ENCODE measurements at regions of chr6 and their contacts with region 1.

Region 1: GRCh38 chr6:45714741-45715507 is 300.7 kb downstream of the CLIC5 start:
- DNase-seq: peak; percentile 46
- H3K4me3 Mint-ChIP-seq: no peak overlapping the region
- H3K27ac Mint-ChIP-seq: peak overlapping the region; percentile 73
- H3K4me1 Mint-ChIP-seq: peaks cover 38% of the 10 kb centered on the region
- H3K27me3 Mint-ChIP-seq: peaks cover 2% of the 10 kb centered on the region

Region 2: GRCh38 chr6:44932651-44933091 is 782.3 kb before region 1 on chr6:
- intact Hi-C with region 1: loop called (anchors 5 kb)
- DNase-seq: no peak
- H3K4me3 Mint-ChIP-seq: peak overlapping the region; percentile 79
- H3K27ac Mint-ChIP-seq: peak overlapping the region; percentile 94
- H3K4me1 Mint-ChIP-seq: peaks cover 56% of the 10 kb centered on the region
- H3K27me3 Mint-ChIP-seq: no peaks in the 10 kb centered on the region

Region 3: DNA sequence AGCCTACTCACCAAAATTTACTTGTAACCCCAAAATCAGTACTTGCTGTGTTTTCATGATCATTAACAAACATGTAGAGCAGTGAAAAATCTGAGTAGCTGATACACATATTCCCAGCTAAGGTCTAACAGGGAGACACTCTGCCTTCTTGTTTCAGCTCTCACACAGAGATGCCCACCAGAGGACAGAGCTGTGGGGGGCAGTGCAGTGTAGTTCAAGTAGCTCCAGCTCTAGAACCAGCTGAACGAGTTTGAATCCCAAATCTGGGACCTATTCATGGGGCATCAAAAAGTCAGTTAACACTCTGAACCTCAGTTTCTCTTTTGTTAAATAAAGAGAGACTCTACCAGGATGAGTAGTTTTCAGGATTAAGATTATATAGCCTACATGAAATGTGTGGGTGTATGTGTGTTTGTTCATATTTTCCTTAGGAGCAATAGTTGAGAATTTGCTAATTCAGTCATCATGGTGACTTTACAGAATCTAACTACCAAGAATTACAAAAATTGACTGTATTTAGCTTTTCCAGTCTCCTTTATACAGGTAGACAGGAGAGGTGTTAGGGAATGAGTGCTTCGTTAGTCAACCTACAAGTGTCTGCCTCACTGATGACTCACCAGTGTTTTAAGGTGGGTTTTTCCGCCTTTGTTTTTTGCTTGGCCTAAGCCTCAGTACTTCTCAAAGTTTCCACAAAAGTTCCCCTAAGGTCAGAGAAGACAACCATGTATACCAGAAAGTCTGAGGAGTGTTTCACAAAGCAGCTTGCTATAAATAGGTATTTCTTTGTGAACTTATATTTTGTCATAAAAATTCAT is 550.8 kb before region 1 on chr6:
- intact Hi-C with region 1: loop called (anchors 1 kb)
- DNase-seq: peak; percentile 31
- H3K4me3 Mint-ChIP-seq: peak overlapping the region; percentile 35
- H3K27ac Mint-ChIP-seq: peak overlapping the region; percentile 89
- H3K4me1 Mint-ChIP-seq: peaks cover 62% of the 10 kb centered on the region
- H3K27me3 Mint-ChIP-seq: no peaks in the 10 kb centered on the region

Region 4: DNA sequence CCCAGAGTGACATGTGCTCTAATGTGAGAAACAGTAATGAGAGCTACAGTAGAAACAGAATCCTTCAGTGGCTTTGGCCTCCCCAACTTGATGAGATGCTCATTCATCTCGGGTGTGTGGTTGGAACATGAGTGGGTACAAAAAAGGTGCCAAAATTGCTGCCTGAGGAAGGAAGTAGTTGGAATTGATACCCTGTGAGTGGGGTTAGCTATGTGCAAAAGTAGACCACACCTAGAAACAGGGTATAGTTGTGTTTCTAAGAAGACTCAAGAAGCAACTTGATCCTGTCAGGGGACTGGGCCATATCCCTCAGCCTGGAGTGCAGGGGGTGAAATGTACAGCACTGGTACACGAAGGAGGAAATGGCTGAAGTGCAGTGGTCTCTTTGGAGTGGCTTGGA is 130.8 kb before region 1 on chr6:
- intact Hi-C with region 1: loop called (anchors 1 kb)
- DNase-seq: no peak
- H3K4me3 Mint-ChIP-seq: peak overlapping the region; percentile 27
- H3K27ac Mint-ChIP-seq: peak overlapping the region; percentile 84
- H3K4me1 Mint-ChIP-seq: peaks cover 52% of the 10 kb centered on the region
- H3K27me3 Mint-ChIP-seq: no peaks in the 10 kb centered on the region

Region 5: DNA sequence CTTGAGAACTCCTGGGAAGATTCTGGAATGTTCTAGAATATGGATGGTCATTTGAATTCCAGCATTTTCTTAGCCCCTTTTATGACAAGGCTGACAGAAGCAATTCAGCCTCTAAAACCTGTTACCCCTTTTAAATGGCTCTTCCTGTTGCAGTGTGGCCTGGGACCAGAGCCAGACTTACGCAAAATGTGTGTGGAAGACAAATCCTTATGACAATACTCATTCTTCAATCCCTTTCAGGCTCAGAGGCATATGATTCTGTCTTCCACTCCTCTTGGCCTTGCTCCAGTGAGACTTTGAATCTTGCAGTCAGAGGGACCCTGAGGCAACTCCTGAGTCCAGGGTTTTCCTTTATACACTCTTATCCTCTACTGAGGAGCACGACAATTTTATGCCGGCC is 13.8 kb after region 1 on chr6:
- intact Hi-C with region 1: no loop called
- DNase-seq: no peak
- H3K4me3 Mint-ChIP-seq: no peak overlapping the region
- H3K27ac Mint-ChIP-seq: peak overlapping the region; percentile 11
- H3K4me1 Mint-ChIP-seq: peaks cover 11% of the 10 kb centered on the region
- H3K27me3 Mint-ChIP-seq: peaks cover 4% of the 10 kb centered on the region

Region 6: DNA sequence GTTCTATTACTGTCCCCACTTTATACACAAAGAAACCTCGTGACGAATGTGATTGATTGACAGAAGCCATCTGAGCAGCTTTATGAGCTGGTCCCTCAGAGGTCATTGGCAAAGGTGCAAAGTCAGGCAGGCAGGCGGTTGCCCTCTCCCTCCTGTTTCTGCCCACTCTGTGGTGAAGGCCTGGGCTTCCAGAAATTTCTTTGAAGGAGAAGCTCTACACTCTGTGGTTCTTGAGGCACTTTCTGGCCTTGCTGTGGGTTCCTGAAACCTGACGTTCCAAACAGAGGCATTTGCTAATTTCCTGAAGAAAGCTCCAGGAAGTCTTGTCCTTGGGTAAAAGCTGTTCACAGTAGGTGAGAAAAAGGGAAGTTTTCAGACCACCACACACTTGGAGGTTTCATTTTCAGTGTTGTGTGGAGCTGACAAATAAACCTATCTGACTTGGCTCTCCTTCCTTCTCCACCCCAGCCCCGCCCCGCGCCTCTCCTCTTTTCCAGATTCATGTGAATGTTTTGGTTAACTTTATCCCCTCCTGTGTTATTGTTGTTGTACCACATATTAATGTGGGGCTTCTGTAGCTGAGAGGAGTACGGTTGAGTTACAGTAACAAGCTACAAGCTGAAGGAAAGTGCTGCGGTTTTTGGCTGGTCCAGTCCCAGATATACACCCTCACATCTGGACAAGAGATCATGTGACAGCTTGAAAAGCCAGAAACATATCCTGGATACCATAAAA is 26.7 kb after region 1 on chr6:
- intact Hi-C with region 1: loop called (anchors 1 kb)
- DNase-seq: no peak
- H3K4me3 Mint-ChIP-seq: peak overlapping the region; percentile 2
- H3K27ac Mint-ChIP-seq: peak overlapping the region; percentile 27
- H3K4me1 Mint-ChIP-seq: peaks cover 44% of the 10 kb centered on the region
- H3K27me3 Mint-ChIP-seq: peaks cover 3% of the 10 kb centered on the region

Region 7: GRCh38 chr6:46501136-46502089 is 786.5 kb after region 1 on chr6:
- intact Hi-C with region 1: no loop called
- DNase-seq: no peak
- H3K4me3 Mint-ChIP-seq: no peak overlapping the region
- H3K27ac Mint-ChIP-seq: no peak overlapping the region
- H3K4me1 Mint-ChIP-seq: no peaks in the 10 kb centered on the region
- H3K27me3 Mint-ChIP-seq: peaks cover 11% of the 10 kb centered on the region